Pancreas (tissue), 10 donors: ENCODE measurements at regions of chr2 and their contacts with region 1.

Region 1: GRCh38 chr2:84881581-84882414 is 914 bp upstream of the TRABD2A start:
- DNase-seq: peak; percentile 63 to 82 (median 74)
- ATAC-seq: peak; percentile 86 to 91 (median 89)
- H3K4me3 ChIP-seq: peak overlapping the region in 2 of 4 donors; percentile 40 to 67
- H3K27ac ChIP-seq: no peak overlapping the region
- H3K4me1 ChIP-seq: peaks cover 0 to 6% (median 0%) of the 10 kb centered on the region in 3 donors
- H3K27me3 ChIP-seq: peaks cover 0 to 10% (median 0%) of the 10 kb centered on the region in 4 donors
- CTCF ChIP-seq: peak; percentile 28 to 51 (median 45)

Region 2: DNA sequence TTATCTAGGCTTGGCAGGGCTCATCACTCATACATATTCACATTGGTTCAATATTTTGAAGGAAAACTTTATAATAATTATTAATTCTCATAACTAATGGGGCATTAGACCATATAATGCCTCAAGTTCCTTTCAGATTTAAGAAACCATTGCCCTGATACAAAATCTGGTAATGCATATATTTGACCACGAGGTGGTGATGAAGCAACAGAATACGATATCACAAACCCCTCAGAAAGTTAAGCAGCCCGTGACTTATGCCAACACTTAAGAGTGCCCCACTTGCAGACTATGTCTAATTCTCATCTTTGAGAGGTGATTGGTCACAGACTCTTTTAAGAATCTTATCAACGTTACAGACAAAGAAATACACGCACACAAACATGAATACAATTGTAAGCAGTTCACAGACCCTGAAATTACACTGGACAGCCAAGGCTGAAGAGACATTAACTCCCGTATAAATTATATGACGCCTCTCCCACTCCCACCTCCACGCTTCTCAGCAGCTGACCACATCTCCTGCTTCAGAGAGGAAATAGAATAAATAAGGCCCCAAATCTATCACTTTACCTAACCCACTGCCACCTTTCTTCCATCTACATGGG is 386.2 kb before region 1 on chr2:
- intact Hi-C with region 1: loop called in 2 of 3 experiments (anchors 5 kb)
- DNase-seq: no peak
- ATAC-seq: peak; percentile 76 to 98 (median 94)
- H3K4me3 ChIP-seq: no peak overlapping the region
- H3K27ac ChIP-seq: no peak overlapping the region
- H3K4me1 ChIP-seq: no peaks in the 10 kb centered on the region
- H3K27me3 ChIP-seq: no peaks in the 10 kb centered on the region
- CTCF ChIP-seq: peak in 3 of 4 donors; percentile 53 to 64 (median 60)

Region 3: DNA sequence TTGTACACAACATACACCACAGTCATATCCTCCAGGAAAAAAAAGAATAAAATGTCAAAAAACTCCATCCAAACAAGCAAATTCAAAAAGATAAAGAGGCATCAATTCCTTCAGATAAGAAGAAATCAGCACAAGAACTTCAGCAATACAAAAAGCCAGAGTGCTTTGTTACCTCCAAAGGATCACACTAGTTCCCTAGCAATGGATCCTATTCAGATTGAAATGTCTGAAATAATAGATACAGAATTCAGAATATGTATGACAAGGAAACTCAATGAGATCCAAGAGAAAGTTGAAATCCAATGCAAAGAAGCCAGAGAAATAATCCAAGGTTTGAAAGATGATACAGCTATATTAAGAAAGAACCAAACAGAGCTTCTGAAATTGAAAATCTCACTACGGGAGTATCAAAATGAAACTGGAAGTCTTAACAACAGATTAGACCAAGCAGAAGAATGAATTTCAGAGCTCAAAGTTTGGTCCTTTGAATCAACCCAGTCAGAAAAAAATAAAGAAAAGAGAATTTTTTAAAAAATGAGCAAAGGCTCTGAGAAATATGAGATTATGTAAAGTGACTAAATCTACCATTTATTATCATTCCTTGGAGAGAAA is 81.5 kb before region 1 on chr2:
- intact Hi-C with region 1: no loop called
- DNase-seq: no peak
- ATAC-seq: no peak
- H3K4me3 ChIP-seq: no peak overlapping the region
- H3K27ac ChIP-seq: no peak overlapping the region
- H3K4me1 ChIP-seq: peaks cover 0 to 2% (median 0%) of the 10 kb centered on the region in 3 donors
- H3K27me3 ChIP-seq: no peaks in the 10 kb centered on the region
- CTCF ChIP-seq: no peak

Region 4: DNA sequence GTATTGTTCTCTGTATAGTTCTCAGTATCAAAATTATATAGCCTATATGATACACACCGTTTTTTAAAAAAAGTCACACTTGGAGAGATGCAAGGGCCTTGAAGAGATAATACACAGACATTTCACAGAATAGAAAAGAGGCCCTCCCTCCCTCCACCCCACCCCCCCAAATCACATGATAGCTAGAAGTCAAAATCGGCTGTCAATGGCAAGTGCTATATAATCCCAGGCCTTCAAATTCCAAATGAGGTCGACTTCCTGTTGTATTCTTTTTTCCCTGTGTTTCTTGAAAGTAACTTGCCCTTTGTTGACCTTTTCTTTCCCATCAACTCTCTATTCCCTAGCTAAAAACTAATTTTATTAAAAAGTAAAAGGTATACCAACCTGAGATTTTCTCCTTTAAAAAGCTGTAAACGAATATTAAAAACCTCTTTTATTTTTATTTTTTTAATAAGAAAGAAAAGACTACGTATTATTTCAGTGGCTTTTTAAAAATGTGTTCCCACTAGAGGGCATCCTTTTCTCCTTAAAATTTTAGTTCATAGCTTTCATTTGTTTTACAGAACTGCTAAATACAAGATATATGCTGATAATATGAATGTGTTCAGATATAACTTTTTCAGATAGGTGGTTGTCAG is 135.7 kb after region 1 on chr2:
- intact Hi-C with region 1: no loop called
- DNase-seq: no peak
- ATAC-seq: no peak
- H3K4me3 ChIP-seq: no peak overlapping the region
- H3K27ac ChIP-seq: no peak overlapping the region
- H3K4me1 ChIP-seq: peaks cover 0 to 33% (median 18%) of the 10 kb centered on the region in 3 donors
- H3K27me3 ChIP-seq: no peaks in the 10 kb centered on the region
- CTCF ChIP-seq: peak in 2 of 4 donors; percentile 8 to 9